AG04449 (cell line): ENCODE measurements at regions of chr13 and their contacts with region 1.

Region 1: DNA sequence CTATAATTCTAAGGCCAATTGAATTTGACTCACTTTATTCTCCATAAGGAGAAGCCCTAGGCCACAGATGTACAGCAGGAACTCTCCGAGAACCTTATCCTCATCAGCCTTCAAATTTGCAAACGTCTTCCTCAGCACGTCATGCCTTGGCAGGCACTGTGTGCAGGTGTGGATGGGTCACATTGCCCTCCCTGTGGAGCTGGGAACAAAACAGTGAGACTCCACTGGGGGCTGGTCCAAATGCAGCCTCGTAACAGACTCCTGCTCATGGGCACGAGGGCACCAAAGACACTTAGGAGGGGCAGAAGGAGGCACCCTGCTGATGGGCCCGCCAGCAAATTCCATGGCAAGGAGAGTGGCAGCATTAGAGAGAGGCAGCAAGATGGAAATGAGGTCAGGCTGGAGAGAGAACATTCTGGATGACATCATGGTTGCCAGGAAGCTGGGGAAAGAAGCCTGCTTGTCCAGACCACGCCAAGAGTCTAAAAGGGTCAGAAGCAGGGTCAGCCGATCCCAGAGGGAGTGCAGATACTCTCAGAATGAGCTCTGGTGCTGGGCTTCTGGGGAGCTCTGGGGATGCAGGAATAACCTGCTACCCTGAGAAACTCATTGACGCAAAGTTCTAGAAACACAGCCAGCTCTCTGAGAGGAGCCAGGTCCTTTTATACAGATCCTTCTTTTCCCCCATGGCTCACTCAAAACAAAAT is 242.2 kb downstream of the B3GLCT start:
- DNase-seq: no peak
- H3K4me3 ChIP-seq: no peak overlapping the region
- CTCF ChIP-seq: no peak

Region 2: DNA sequence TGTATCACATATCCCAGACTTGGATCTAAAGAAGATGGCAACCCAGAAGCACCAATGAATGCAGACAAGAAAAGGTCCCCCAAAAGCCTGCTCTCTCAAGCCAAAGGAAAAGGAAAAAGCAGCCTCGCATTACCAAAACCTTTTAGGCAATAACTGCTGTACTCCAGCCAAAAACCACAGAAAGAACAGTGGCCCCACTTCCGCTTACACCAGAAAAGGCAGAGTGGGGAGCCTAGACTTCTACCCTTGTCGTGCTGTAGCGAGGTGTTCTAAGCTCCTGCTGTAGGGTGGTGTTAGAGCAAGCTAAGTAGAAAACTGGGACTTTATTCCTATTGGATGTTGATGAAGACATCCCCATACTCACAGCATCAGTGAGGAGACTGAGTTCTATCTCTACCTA is 53.4 kb after region 1 on chr13:
- CTCF ChIA-PET with region 1: no interaction called
- POLR2A ChIA-PET with region 1: no interaction called
- DNase-seq: no peak
- H3K4me3 ChIP-seq: no peak overlapping the region
- CTCF ChIP-seq: no peak

Region 3: GRCh38 chr13:31605076-31605858 is 163.3 kb after region 1 on chr13:
- CTCF ChIA-PET with region 1: no interaction called
- POLR2A ChIA-PET with region 1: no interaction called
- DNase-seq: no peak
- H3K4me3 ChIP-seq: no peak overlapping the region
- CTCF ChIP-seq: no peak

Region 4: DNA sequence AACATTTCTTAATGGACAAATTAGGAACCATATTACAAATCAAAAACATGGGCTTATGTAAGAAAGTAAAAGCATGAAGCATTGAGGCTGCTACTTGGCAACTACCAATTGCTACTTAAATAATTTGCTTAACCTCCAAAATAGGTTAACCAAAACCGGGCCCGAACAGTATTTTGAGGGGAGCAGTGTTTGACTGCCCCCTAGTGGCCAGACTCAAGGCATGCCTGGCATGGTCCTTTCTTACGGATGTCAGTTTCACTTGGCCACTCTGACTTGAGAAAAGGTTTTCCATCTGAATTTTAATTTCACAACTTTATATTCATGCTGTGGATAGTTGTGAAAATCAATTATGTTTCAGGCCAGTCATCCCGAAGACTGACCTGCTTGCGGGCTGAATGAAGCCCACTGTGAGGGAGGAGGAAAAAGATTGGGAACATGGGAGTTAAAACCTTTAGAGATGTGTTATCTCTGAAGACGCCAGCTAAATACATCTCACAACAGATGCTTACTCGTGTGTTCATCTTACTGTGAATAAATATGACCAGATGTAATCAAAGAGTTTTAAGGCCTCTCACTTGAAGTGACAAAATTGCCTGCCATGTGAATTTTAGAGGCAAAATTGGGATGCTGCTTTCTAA is 300.3 kb after region 1 on chr13:
- CTCF ChIA-PET with region 1: interaction called, 22 read pairs
- POLR2A ChIA-PET with region 1: no interaction called
- DNase-seq: no peak
- H3K4me3 ChIP-seq: no peak overlapping the region
- CTCF ChIP-seq: peak; percentile 82